Naive thymus-derived CD4-positive, alpha-beta T cell (primary cell): ENCODE measurements at regions of chr2 and their contacts with region 1.

Region 1: GRCh38 chr2:3303583-3304406 is 73.8 kb downstream of the EIPR1 start:
- DNase-seq: peak; percentile 40 to 83 (median 70)
- ATAC-seq: peak; percentile 94
- H3K4me3 ChIP-seq: no peak overlapping the region
- H3K4me3 Mint-ChIP-seq: peak overlapping the region in 6 of 10 donors; percentile 18 to 65 (median 34)
- H3K27ac ChIP-seq: no peak overlapping the region
- H3K27ac Mint-ChIP-seq: peak overlapping the region in 6 of 9 donors; percentile 34 to 71 (median 68)
- H3K4me1 ChIP-seq: peaks cover 3 to 4% of the 10 kb centered on the region in 2 donors
- H3K4me1 Mint-ChIP-seq: peaks cover 9 to 31% (median 26%) of the 10 kb centered on the region in 7 donors
- H3K27me3 ChIP-seq: no peaks in the 10 kb centered on the region
- H3K27me3 Mint-ChIP-seq: no peaks in the 10 kb centered on the region

Region 2: GRCh38 chr2:1886405-1886992 is 1417.3 kb before region 1 on chr2:
- CTCF ChIA-PET with region 1: no interaction called
- POLR2A ChIA-PET with region 1: no interaction called
- intact Hi-C with region 1: loop called in 1 of 2 experiments (anchors 5 kb)
- DNase-seq: peak in 5 of 9 donors; percentile 5 to 25 (median 14)
- ATAC-seq: no peak
- H3K4me3 ChIP-seq: no peak overlapping the region
- H3K4me3 Mint-ChIP-seq: no peak overlapping the region
- H3K27ac ChIP-seq: no peak overlapping the region
- H3K27ac Mint-ChIP-seq: no peak overlapping the region
- H3K4me1 ChIP-seq: no peaks in the 10 kb centered on the region
- H3K4me1 Mint-ChIP-seq: peaks cover 0 to 3% (median 0%) of the 10 kb centered on the region in 7 donors
- H3K27me3 ChIP-seq: no peaks in the 10 kb centered on the region
- H3K27me3 Mint-ChIP-seq: peaks cover 6 to 37% (median 18%) of the 10 kb centered on the region in 5 donors

Region 3: GRCh38 chr2:2846332-2847208 is 457.2 kb before region 1 on chr2:
- CTCF ChIA-PET with region 1: no interaction called
- POLR2A ChIA-PET with region 1: no interaction called
- intact Hi-C with region 1: loop called in 1 of 2 experiments (anchors 10 kb)
- DNase-seq: no peak
- ATAC-seq: no peak
- H3K4me3 ChIP-seq: no peak overlapping the region
- H3K4me3 Mint-ChIP-seq: no peak overlapping the region
- H3K27ac ChIP-seq: no peak overlapping the region
- H3K27ac Mint-ChIP-seq: no peak overlapping the region
- H3K4me1 ChIP-seq: no peaks in the 10 kb centered on the region
- H3K4me1 Mint-ChIP-seq: no peaks in the 10 kb centered on the region
- H3K27me3 ChIP-seq: no peaks in the 10 kb centered on the region
- H3K27me3 Mint-ChIP-seq: no peaks in the 10 kb centered on the region

Region 4: GRCh38 chr2:3179208-3179607 is 124.6 kb before region 1 on chr2:
- CTCF ChIA-PET with region 1: no interaction called
- POLR2A ChIA-PET with region 1: no interaction called
- intact Hi-C with region 1: loop called (anchors 1 kb)
- DNase-seq: peak in 1 of 9 donors; percentile 4
- ATAC-seq: no peak
- H3K4me3 ChIP-seq: no peak overlapping the region
- H3K4me3 Mint-ChIP-seq: no peak overlapping the region
- H3K27ac ChIP-seq: no peak overlapping the region
- H3K27ac Mint-ChIP-seq: no peak overlapping the region
- H3K4me1 ChIP-seq: no peaks in the 10 kb centered on the region
- H3K4me1 Mint-ChIP-seq: peaks cover 0 to 3% (median 0%) of the 10 kb centered on the region in 7 donors
- H3K27me3 ChIP-seq: no peaks in the 10 kb centered on the region
- H3K27me3 Mint-ChIP-seq: no peaks in the 10 kb centered on the region

Region 5: DNA sequence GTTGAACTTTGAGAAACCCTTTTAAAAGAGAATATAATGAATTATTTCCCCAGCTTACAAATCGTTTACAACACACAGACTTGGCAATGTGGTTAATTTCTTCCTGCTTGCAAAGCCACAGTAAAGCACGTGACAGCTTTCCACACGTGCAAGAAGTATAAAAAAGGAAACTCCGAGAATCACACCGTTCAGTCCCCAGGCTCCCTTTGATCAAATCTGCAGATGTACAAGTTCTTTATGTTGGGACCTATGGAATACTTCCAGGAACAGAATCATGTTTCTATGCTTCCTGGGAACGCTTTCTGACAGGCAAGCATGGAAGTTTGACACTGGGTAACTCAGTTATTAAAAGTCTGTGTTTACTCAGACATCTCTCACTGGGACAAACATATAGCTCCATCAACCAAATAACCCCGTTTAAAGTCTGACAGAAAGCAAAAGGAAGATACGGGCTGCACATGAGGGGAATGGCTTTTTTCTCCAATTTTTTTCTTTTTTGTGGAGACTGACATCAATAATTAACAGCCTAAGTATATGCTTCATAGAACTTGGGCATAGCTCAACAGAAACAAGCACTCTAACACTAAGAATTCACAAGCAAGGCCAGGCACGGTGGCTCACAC is 60.9 kb before region 1 on chr2:
- CTCF ChIA-PET with region 1: no interaction called
- POLR2A ChIA-PET with region 1: interaction called, 3 read pairs
- intact Hi-C with region 1: loop called in 1 of 2 experiments (anchors 1 kb)
- DNase-seq: peak in 7 of 9 donors; percentile 62 to 79 (median 74)
- ATAC-seq: peak; percentile 90
- H3K4me3 ChIP-seq: peak overlapping the region; percentile 12
- H3K4me3 Mint-ChIP-seq: peak overlapping the region in 9 of 10 donors; percentile 29 to 86 (median 70)
- H3K27ac ChIP-seq: peak overlapping the region; percentile 69
- H3K27ac Mint-ChIP-seq: peak overlapping the region in 6 of 9 donors; percentile 72 to 93 (median 86)
- H3K4me1 ChIP-seq: peaks cover 33 to 59% of the 10 kb centered on the region in 2 donors
- H3K4me1 Mint-ChIP-seq: peaks cover 17 to 36% (median 23%) of the 10 kb centered on the region in 7 donors
- H3K27me3 ChIP-seq: no peaks in the 10 kb centered on the region
- H3K27me3 Mint-ChIP-seq: no peaks in the 10 kb centered on the region

Region 6: DNA sequence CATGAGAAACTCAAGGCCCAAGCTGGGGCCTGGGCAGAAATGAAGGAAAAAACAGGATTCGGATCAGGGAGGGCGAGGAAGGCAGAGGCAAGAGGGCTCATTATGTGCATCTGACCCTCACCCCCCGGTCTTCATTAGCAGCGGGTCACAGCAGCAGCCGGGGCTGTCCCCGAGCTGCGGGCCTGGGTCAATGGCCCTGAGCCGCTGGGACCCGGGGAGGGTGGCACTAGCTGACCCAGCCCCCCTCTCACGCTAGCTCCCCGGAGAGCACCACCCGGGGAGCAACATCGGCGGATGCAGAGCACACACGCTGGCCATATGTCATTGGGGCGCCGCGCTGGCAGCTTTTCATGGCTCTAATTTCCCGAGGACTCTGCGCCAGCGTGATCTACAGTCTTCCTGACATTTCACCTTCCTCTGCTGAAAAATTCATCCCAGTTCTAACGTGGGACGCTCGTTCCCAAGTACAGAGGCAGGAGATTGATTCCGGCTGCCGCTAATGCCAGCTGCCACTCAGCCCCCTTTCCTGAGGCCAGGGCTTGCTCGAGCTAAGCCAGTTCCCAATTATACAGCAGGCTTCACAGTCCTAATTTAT is 10.1 kb after region 1 on chr2:
- CTCF ChIA-PET with region 1: no interaction called
- POLR2A ChIA-PET with region 1: no interaction called
- intact Hi-C with region 1: no loop called
- DNase-seq: no peak
- ATAC-seq: no peak
- H3K4me3 ChIP-seq: no peak overlapping the region
- H3K4me3 Mint-ChIP-seq: no peak overlapping the region
- H3K27ac ChIP-seq: no peak overlapping the region
- H3K27ac Mint-ChIP-seq: peak overlapping the region in 2 of 9 donors; percentile 14 to 70
- H3K4me1 ChIP-seq: peaks cover 0 to 10% of the 10 kb centered on the region in 2 donors
- H3K4me1 Mint-ChIP-seq: peaks cover 7 to 37% (median 17%) of the 10 kb centered on the region in 7 donors
- H3K27me3 ChIP-seq: no peaks in the 10 kb centered on the region
- H3K27me3 Mint-ChIP-seq: no peaks in the 10 kb centered on the region

Region 7: DNA sequence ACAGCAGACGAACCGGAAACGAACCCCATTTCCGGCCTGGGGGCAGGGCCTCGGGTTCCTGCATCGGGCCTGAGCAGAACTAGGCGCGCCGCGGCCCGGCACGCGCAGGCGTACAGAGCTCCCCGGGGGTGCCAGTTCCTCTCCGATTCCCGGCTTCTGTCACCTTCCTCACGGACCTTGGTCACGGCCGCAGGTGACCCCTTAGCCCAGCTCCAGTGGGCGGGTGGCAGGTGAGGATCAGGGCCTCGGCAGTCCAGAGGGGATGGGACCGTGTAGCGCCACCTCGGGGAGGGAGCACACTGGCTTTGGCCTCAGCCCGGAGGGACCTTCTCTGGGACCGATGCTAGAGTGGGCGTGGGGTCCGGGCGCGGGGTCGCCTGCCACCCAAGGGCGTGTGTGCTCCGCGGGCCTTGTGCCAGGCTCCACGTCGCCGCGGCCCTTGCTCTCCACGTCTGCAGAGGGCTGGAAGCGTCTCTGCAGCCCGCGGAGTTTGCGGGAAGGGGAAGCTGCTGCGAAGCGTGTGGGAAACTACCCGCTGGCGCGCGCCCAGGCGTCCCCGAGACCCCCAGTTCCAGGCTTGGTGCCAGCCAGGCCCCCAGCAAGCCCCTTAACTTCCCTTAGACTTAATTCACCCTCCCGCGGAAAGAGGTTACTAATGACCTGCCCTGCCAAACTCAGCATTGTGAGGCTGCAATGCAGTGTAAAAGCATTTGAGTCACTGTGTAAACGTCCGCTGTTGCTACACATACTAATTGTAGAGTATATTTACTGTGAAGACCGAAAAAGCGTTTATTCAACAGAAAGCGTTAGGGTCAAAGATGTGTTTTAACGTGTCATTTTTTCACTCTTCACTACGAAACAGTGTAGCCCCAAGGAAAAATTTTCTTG is 76.1 kb after region 1 on chr2 and contains the start of gene TRAPPC12:
- CTCF ChIA-PET with region 1: no interaction called
- POLR2A ChIA-PET with region 1: no interaction called
- intact Hi-C with region 1: no loop called
- DNase-seq: peak; percentile 83 to 94 (median 93)
- ATAC-seq: peak; percentile 87
- H3K4me3 ChIP-seq: peak within 1 kb of the TSS; percentile 94
- H3K4me3 Mint-ChIP-seq: peak within 1 kb of the TSS; percentile 96 to 99 (median 98)
- H3K27ac ChIP-seq: peak within 1 kb of the TSS; percentile 87
- H3K27ac Mint-ChIP-seq: peak within 1 kb of the TSS; percentile 94 to 99 (median 99)
- H3K4me1 ChIP-seq: peaks cover 24 to 29% of the 10 kb centered on the region in 2 donors
- H3K4me1 Mint-ChIP-seq: peaks cover 21 to 78% (median 52%) of the 10 kb centered on the region in 7 donors
- H3K27me3 ChIP-seq: no peaks in the 10 kb centered on the region
- H3K27me3 Mint-ChIP-seq: no peaks in the 10 kb centered on the region
- total RNA-seq, gene TRAPPC12: 90.5 to 160 (median 121) TPM

Region 8: GRCh38 chr2:3885629-3886628 is 582.1 kb after region 1 on chr2:
- CTCF ChIA-PET with region 1: no interaction called
- POLR2A ChIA-PET with region 1: no interaction called
- intact Hi-C with region 1: no loop called
- DNase-seq: no peak
- ATAC-seq: no peak
- H3K4me3 ChIP-seq: no peak overlapping the region
- H3K4me3 Mint-ChIP-seq: no peak overlapping the region
- H3K27ac ChIP-seq: no peak overlapping the region
- H3K27ac Mint-ChIP-seq: no peak overlapping the region
- H3K4me1 ChIP-seq: no peaks in the 10 kb centered on the region
- H3K4me1 Mint-ChIP-seq: no peaks in the 10 kb centered on the region
- H3K27me3 ChIP-seq: no peaks in the 10 kb centered on the region
- H3K27me3 Mint-ChIP-seq: peaks cover 0 to 6% (median 0%) of the 10 kb centered on the region in 5 donors